Left ventricle myocardium superior (tissue), 1 donor: ENCODE measurements at regions of chr6 and their contacts with region 1.

Region 1: GRCh38 chr6:36979347-36979742 is 6.7 kb downstream of the MTCH1 start:
- DNase-seq: peak; percentile 68
- ATAC-seq: peak; percentile 75

Region 2: GRCh38 chr6:36504982-36505381 is 474.4 kb before region 1 on chr6:
- intact Hi-C with region 1: no loop called
- DNase-seq: no peak
- ATAC-seq: peak; percentile 37

Region 3: GRCh38 chr6:36897609-36898008 is 81.7 kb before region 1 on chr6:
- intact Hi-C with region 1: loop called (anchors 10 kb)
- DNase-seq: no peak
- ATAC-seq: peak; percentile 63

Region 4: GRCh38 chr6:37110500-37111461 is 131.4 kb after region 1 on chr6:
- intact Hi-C with region 1: no loop called
- DNase-seq: no peak
- ATAC-seq: no peak